Right cardiac atrium (tissue), 5 donors: ENCODE measurements at regions of chr15 and their contacts with region 1.

Region 1: DNA sequence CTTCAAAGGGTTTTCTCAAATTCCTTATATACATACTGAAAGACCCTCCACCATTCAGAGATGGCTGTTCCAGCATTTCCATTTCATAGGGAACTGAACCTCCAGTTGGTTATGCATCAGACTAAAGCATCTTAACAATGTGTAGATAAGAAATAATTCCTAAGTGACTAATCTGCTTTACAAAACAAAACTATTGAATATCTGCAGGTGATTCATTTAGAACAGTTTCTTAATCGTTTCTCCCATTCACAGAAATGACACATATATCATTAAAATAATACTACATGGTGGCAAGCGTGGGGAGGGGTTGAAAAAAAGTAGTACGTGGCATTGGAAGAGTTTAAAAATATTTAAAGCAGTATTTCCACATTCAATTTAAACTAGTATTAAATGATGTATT is 19.5 kb downstream of the COPS2 start:
- DNase-seq: no peak
- ATAC-seq: no peak
- H3K4me3 ChIP-seq: no peak overlapping the region
- H3K27ac ChIP-seq: no peak overlapping the region
- H3K4me1 ChIP-seq: no peaks in the 10 kb centered on the region
- H3K27me3 ChIP-seq: no peaks in the 10 kb centered on the region

Region 2: GRCh38 chr15:49023354-49023753 is 112.5 kb before region 1 on chr15:
- intact Hi-C with region 1: loop called in 1 of 4 experiments (anchors 10 kb)
- DNase-seq: no peak
- ATAC-seq: no peak
- H3K4me3 ChIP-seq: no peak overlapping the region
- H3K27ac ChIP-seq: no peak overlapping the region
- H3K4me1 ChIP-seq: no peaks in the 10 kb centered on the region
- H3K27me3 ChIP-seq: no peaks in the 10 kb centered on the region

Region 3: DNA sequence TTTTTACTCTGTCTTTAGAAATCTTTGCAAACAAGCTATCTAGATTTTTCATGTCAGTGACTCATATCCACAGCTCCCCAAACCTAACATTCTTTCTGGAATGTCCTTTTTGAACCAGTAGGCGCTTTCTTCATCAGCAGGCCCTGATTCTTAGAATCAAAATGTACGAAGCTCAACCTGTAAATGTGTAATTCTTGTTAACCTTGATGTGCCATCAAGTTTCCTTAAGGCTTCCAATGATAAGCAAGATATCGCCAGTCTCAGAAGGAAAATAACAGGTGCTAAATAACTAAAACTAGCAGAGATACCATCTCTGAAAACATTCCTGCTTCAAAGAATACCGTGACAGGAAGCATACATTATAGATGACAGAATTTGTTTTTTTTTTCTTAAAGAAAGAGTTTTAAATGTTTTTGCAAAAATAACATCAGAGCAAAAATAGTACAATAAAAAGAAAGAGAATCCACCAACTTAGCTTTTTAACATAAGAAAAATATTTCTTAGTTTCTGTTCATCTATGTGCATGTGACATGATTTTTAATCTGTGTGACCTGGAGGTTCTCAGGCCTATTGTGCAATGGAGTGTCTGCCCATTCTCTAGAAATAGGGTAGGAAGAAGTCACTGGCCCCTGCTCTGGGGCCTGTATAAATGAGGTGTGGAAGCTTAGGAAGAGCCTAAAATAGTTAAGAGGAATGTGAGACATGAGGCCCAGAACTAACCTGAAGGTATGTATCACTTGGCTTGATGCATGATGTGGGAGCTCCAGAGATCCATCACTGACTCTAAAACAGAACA is 75.0 kb before region 1 on chr15:
- intact Hi-C with region 1: no loop called
- DNase-seq: no peak
- ATAC-seq: no peak
- H3K4me3 ChIP-seq: no peak overlapping the region
- H3K27ac ChIP-seq: no peak overlapping the region
- H3K4me1 ChIP-seq: no peaks in the 10 kb centered on the region
- H3K27me3 ChIP-seq: no peaks in the 10 kb centered on the region